ENCODE measurements at regions of chr4 and their contacts with region 1.

Region 1: DNA sequence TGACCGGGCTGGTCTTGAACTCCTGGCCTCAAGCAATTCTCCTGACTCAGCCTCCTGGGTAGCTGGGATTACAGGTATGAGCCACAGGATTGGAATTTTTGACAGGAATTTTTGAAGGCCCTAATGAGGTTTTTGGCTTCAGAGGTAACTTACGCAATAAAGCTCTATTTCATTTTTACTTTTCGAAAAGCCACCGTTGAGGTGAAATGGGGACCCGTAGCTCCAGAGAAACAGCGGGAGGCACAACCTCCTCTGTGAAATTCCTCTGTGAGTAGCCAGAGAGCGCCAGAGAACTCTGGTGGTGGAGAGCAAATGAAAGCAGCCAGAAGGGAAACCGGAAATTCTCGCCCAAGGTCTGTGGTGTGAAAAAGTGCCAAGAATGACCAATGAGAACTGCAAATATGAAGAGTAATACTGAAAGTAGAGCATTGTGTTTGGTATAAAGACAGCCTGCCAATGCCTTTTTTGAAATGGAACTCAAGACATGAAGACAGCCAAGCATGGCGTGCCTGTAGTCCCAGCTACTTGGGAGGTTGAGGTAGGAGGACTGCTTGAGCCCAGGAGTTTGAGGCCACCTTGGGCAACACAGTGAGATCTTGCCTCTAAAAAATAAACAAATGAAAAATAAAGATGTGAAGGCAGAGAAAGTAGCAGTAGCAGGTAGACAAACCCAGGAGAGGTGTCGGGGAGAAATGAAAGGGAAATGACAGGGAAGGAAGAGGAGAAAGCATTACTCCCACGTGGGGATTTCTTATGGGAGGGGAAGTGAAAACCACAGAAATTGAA is 33.0 kb upstream of the TMEM131L start:
- DNase-seq: peak; percentile 93
- H3K4me3 Mint-ChIP-seq: peak overlapping the region; percentile 83
- H3K27ac Mint-ChIP-seq: peak overlapping the region; percentile 91
- H3K4me1 Mint-ChIP-seq: peaks cover 45% of the 10 kb centered on the region
- H3K27me3 Mint-ChIP-seq: peaks cover 1% of the 10 kb centered on the region

Region 2: DNA sequence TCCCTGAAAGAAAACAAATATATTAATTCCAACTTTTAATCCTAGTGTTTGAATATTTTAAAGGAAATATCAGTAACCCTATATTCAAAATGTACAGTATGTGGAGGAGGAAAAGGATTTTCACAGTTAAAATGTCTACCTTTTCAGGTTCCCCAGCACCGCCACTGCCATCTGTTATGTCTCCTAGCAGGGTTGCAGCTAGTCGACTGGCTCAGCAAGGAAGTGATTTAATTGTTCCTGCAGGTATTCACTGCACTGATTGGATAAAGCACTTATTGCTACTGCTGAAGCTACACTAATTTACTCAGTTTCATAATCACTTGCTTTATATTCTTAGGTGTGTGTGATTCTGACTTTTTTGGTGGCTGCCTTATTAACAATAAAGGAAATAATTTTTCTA is 562.6 kb before region 1 on chr4:
- intact Hi-C with region 1: no loop called
- DNase-seq: no peak
- H3K4me3 Mint-ChIP-seq: no peak overlapping the region
- H3K27ac Mint-ChIP-seq: no peak overlapping the region
- H3K4me1 Mint-ChIP-seq: no peaks in the 10 kb centered on the region
- H3K27me3 Mint-ChIP-seq: no peaks in the 10 kb centered on the region

Region 3: DNA sequence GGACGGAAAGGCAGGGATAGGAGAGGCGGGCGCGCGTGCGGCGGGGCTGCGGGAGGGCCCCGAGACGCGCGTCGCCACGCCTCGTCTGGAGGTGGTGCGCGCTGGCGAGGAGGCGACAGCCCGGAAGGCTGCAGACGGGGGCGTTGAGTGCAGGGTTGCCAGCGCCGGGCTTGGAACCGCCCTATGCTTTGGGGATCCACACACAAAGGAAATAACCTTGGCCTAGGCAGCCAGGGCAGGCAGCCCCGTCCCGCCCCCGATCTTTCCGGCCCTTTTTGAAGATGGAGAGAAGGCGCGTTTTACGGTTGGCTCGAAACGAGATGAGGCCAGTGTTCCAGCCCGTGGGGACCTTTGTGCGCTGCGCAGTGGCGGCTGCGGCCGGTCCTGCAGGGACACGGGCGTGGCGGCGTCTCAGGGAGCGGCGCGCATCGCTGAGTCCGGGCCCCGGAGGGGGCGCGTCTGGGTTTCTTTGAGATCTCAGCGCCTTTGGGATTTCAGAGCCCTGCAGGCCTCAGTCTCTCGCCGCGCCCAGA is 279.8 kb before region 1 on chr4:
- intact Hi-C with region 1: loop called (anchors 10 kb)
- DNase-seq: peak; percentile 92
- H3K4me3 Mint-ChIP-seq: peak overlapping the region; percentile 89
- H3K27ac Mint-ChIP-seq: peak overlapping the region; percentile 79
- H3K4me1 Mint-ChIP-seq: peaks cover 48% of the 10 kb centered on the region
- H3K27me3 Mint-ChIP-seq: peaks cover 36% of the 10 kb centered on the region

Region 4: DNA sequence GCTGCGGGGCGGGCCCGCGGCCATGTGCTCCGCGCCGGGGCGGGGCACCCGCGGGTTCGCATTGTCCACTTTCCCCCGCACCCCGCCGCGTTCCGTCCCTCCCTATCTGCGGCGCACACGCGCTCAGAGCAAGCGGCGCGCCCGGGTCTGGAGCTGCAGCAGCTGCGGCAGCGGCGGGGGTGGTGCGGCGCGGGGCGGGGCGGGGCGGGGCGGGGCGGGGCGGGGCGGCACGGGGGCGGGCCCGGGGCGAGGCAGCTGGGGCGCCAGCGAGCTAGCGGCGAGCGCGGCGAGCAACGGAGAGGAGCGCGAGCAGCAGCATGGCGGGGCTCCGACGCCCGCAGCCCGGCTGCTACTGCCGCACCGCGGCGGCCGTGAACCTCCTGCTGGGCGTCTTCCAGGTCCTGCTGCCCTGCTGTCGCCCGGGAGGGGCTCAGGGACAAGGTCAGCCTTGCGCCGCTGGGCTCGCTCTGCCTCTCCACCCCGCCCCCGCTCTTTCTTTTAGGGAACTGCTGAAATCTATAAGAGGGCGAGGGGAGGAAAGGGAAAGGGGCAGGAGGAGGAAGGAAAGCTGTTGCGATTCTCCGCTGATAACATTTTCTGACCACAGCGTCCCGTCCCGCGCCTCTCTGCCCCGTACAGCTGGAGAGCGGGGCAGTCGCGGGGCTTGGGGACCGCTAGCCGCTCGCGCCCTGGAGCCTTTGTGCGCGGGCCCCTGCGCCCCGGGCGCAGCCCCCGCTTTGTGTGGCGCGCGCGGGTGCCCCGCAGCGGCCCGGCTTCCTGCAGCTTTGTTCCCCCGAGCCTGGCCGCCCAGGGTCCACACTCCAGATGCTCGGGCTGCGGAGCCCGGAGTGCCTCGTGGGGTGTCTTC is 33.2 kb after region 1 on chr4 and contains the start of gene TMEM131L:
- intact Hi-C with region 1: loop called (anchors 1 kb)
- DNase-seq: peak; percentile 90
- H3K4me3 Mint-ChIP-seq: peak within 1 kb of the TSS; percentile 85
- H3K27ac Mint-ChIP-seq: peak within 1 kb of the TSS; percentile 93
- H3K4me1 Mint-ChIP-seq: peaks cover 47% of the 10 kb centered on the region
- H3K27me3 Mint-ChIP-seq: no peaks in the 10 kb centered on the region
- total RNA-seq, gene TMEM131L: 40.3 and 40.6 TPM in 2 replicates

Region 5: DNA sequence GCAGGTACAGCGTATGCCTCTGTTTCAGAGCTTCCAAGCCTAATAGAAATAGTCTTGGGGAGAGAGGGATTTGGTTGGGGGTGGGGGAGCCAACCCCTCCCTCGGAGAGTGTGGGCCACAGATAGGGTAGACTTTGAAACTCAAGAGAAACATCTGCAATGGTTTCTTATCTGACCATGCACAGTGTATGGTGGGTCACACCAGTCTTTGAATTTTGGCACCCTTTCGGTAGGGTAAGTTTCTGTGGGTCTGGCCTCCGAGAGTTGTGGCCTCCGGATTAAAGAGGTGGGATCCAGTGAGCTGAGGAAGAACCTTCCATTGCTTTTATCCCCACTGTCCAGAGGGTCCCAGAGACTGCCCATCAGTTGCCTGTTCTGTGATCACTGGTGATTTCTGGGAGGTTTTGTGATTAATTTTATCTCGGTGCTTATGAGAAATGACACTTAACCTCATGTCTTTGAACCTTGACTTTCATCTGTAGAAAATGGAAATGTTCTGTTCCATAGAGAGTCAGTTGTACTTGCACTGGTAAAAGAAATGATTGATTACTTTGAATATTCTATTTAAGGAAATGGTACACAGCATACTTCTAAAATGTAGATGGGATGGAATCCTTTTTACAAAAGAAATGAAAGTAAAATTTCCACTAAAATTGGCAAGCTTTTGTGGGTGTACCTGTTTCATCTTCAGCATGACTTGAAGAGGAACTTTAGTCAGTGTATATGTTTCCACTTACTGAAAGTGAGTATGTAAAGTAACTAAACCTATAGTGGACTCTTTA is 95.7 kb after region 1 on chr4:
- intact Hi-C with region 1: loop called (anchors 1 kb)
- DNase-seq: peak; percentile 68
- H3K4me3 Mint-ChIP-seq: peak overlapping the region; percentile 80
- H3K27ac Mint-ChIP-seq: peak overlapping the region; percentile 95
- H3K4me1 Mint-ChIP-seq: peaks cover 72% of the 10 kb centered on the region
- H3K27me3 Mint-ChIP-seq: no peaks in the 10 kb centered on the region

Region 6: DNA sequence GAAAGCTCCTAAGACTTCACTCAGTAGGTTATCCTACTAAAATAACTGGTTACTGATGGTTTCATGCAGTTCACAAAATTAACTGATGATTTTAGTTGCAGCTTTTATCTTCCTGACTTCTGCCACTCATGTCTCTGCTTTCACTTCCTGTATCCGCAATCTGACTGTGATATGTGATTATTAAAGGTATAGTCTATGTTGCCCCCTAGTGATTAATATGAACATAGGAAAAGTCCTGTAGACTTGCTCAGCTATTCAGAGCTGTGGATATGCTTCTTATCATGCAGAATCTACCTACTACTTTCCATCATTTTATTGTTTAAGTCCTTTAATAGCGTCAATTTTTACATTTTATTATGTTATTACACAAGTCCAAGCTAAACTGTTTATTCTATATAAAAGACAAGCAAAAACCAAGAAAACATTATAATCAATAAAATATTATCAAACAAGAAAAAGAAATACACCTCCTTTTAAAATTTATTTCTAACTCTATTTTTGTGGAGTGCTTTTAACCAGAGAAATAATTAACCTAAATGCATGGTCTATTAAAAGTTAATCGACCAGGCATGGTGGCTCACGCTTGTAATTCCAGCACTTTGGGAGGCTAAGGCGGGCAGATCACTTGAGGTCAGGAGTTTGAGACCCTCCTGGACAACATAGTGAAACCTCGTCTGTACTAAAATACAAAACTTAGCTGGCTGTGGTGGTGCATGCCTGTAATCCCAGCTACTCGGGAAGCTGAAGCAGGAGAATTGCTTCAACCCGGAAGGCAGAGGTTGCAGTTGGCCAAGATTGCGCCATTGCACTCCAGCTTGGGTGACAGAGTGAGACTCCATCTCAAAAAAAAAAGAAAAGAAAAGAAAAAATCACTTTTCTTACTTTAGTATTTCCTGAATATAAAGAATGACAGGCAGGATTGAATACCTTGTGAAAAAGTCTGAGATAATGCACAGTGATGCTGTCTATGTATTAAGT is 210.5 kb after region 1 on chr4:
- intact Hi-C with region 1: loop called (anchors 2 kb)
- DNase-seq: no peak
- H3K4me3 Mint-ChIP-seq: no peak overlapping the region
- H3K27ac Mint-ChIP-seq: no peak overlapping the region
- H3K4me1 Mint-ChIP-seq: peaks cover 19% of the 10 kb centered on the region
- H3K27me3 Mint-ChIP-seq: no peaks in the 10 kb centered on the region

Measured in activated CD4-positive, alpha-beta T cell treated with anti-CD3 and anti-CD28 coated beads, Interleukin-2, amount 10 ng/mL, durations not matched to agents 24 days and 14 days (primary cell).